ENCODE measurements at regions of chr1 and their contacts with region 1.

Region 1: GRCh38 chr1:203486618-203487370 is 7.2 kb upstream of the OPTC start:
- DNase-seq: no peak
- ATAC-seq: no peak
- H3K4me3 Mint-ChIP-seq: peak overlapping the region; percentile 72
- H3K27ac Mint-ChIP-seq: peak overlapping the region; percentile 45
- H3K4me1 Mint-ChIP-seq: peaks cover 14% of the 10 kb centered on the region
- H3K27me3 Mint-ChIP-seq: peaks cover 7% of the 10 kb centered on the region; the same call in 1 of the 2 replicates
- CTCF ChIP-seq: no peak

Region 2: DNA sequence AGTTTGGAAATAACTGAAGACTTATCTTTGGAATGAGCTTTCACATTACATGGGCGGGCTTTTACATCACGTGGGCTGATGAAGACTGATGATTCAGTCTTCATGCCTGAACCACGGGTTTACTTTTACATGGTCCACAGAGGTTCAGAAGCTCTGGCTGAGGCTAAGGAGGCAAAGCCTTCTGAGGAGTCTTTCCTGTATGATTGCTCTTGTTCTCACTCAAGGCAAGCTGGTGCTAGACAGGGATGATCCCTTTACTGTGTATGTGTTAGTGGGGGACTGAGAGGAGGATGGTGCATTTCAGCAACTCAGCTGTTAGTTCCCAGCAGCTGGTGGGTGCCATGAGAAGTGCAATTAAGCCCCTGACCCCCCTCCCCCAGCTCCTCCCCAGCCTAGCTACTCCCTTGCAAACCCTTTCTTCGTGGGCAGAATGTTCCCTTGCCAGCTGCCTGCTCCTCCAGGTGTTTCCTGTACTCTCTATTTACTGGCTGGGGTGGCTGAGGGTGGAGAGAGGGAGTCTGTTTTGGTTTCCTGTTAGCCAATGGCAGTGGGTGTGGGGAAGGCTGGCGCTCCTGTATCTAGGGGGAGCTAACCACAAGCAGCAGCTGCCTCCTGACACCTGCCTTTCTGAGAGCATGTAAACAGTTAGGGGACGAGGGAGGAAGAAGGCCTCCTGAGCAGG is 166.1 kb before region 1 on chr1:
- CTCF ChIA-PET with region 1: interaction called, 12 read pairs
- POLR2A ChIA-PET with region 1: no interaction called
- DNase-seq: peak; percentile 63
- ATAC-seq: peak; percentile 97
- H3K4me3 Mint-ChIP-seq: no peak overlapping the region
- H3K27ac Mint-ChIP-seq: no peak overlapping the region
- H3K4me1 Mint-ChIP-seq: peaks cover 36% of the 10 kb centered on the region
- H3K27me3 Mint-ChIP-seq: peaks cover 96% of the 10 kb centered on the region
- CTCF ChIP-seq: no peak

Region 3: GRCh38 chr1:203326830-203327683 is 159.7 kb before region 1 on chr1:
- CTCF ChIA-PET with region 1: interaction called, 13 read pairs
- POLR2A ChIA-PET with region 1: no interaction called
- DNase-seq: peak; percentile 91
- ATAC-seq: peak; percentile 85
- H3K4me3 Mint-ChIP-seq: peak overlapping the region; percentile 69
- H3K27ac Mint-ChIP-seq: no peak overlapping the region
- H3K4me1 Mint-ChIP-seq: peaks cover 50% of the 10 kb centered on the region
- H3K27me3 Mint-ChIP-seq: peaks cover 62% of the 10 kb centered on the region
- CTCF ChIP-seq: no peak

Region 4: GRCh38 chr1:203351037-203352013 is 135.5 kb before region 1 on chr1 and contains the start of gene FMOD:
- CTCF ChIA-PET with region 1: interaction called, 16 read pairs
- POLR2A ChIA-PET with region 1: no interaction called
- DNase-seq: peak; percentile 49
- ATAC-seq: peak; percentile 97
- H3K4me3 Mint-ChIP-seq: no peak within 1 kb of the TSS
- H3K27ac Mint-ChIP-seq: no peak within 1 kb of the TSS; the same call in 1 of the 2 replicates
- H3K4me1 Mint-ChIP-seq: peaks cover 11% of the 10 kb centered on the region
- H3K27me3 Mint-ChIP-seq: peaks cover 13% of the 10 kb centered on the region
- CTCF ChIP-seq: no peak
- total RNA-seq, gene FMOD: 0.05 to 0.79 TPM (median 0.14 TPM) in 3 replicates

Region 5: GRCh38 chr1:203448521-203449061 is 38.2 kb before region 1 on chr1:
- CTCF ChIA-PET with region 1: interaction called, 11 read pairs
- POLR2A ChIA-PET with region 1: no interaction called
- DNase-seq: no peak
- ATAC-seq: peak; percentile 81
- H3K4me3 Mint-ChIP-seq: no peak overlapping the region
- H3K27ac Mint-ChIP-seq: no peak overlapping the region
- H3K4me1 Mint-ChIP-seq: peaks cover 16% of the 10 kb centered on the region
- H3K27me3 Mint-ChIP-seq: no peaks in the 10 kb centered on the region; the same call in none of the 2 replicates
- CTCF ChIP-seq: no peak

Region 6: GRCh38 chr1:203463469-203464062 is 23.2 kb before region 1 on chr1:
- CTCF ChIA-PET with region 1: interaction called, 26 read pairs
- POLR2A ChIA-PET with region 1: interaction called, 6 read pairs
- DNase-seq: no peak
- ATAC-seq: peak; percentile 76
- H3K4me3 Mint-ChIP-seq: no peak overlapping the region
- H3K27ac Mint-ChIP-seq: no peak overlapping the region
- H3K4me1 Mint-ChIP-seq: peaks cover 16% of the 10 kb centered on the region
- H3K27me3 Mint-ChIP-seq: no peaks in the 10 kb centered on the region; the same call in 1 of the 2 replicates
- CTCF ChIP-seq: no peak

Region 7: DNA sequence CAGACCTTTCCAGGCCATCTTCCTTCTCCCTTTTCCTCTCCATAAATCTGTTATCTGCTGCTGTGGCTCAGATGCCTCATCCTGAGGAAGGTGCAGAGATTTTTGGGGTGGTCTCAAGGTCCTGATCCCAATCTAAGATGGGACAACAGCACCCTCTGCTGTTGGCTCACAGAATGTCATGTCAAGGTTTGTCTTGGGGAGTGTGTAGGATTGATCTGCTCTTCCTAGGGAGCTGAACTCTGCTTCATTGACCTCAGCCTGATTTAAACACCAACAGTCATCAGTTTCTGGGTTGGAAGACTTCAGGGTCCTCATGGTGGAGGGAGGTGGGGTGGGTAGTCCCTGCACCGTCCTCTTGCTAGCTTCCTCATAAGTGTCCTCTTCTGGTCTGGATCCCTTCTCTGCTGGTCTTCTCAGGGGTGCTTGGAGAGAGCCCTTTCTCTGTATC is 215.4 kb after region 1 on chr1:
- CTCF ChIA-PET with region 1: interaction called, 13 read pairs
- POLR2A ChIA-PET with region 1: no interaction called
- DNase-seq: peak; percentile 84
- ATAC-seq: peak; percentile 93
- H3K4me3 Mint-ChIP-seq: no peak overlapping the region
- H3K27ac Mint-ChIP-seq: no peak overlapping the region
- H3K4me1 Mint-ChIP-seq: no peaks in the 10 kb centered on the region
- H3K27me3 Mint-ChIP-seq: no peaks in the 10 kb centered on the region
- CTCF ChIP-seq: peak; percentile 82